ENCODE measurements at regions of chr7 and their contacts with region 1.

Region 1: GRCh38 chr7:29921404-29922010 is 68.1 kb downstream of the SCRN1 start:
- DNase-seq: peak; percentile 35
- H3K4me3 ChIP-seq: no peak overlapping the region
- H3K27ac ChIP-seq: no peak overlapping the region
- H3K4me1 ChIP-seq: no peaks in the 10 kb centered on the region
- H3K27me3 ChIP-seq: no peaks in the 10 kb centered on the region
- CTCF ChIP-seq: peak; percentile 85 to 91 (median 86)
- EP300 ChIP-seq: no peak
- POLR2A ChIP-seq: no peak

Region 2: DNA sequence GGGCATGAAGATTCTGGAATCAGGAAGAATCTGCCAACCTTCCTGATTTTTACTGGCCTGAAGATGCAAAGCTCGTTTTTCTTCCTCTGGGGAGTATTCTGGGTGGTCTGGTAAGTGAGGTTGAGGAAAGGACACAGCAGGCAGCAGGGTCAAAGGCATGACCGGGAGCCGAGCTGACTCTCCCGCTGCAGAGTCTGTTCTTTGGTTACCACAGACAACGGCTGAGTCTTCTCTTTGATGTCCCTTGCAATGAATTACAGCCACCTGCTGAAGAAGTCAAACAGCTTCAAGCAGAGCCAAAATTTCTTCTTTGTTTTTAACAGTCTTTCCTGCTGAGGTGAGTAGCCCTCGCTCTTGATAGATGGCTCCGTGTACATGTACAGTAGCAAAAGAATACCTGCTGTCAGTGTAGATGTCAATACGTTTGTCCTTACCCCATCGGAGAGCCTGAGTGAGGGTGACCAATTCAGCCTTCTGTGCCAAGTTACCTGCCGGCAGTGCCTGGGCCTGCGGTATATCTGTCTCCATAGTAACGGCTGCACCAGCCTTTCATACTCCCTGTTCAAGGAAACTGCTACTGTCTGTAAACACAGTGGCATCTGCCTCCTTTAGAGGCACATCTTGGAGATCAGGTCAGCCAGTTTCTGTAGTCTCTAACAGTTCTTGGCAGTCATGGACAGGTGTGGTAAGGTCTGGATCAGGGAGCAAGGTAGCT is 281.5 kb before region 1 on chr7:
- in situ Hi-C with region 1: loop called in 3 of 4 experiments (anchors 25 kb)
- intact Hi-C with region 1: no loop called
- DNase-seq: no peak
- H3K4me3 ChIP-seq: no peak overlapping the region
- H3K27ac ChIP-seq: no peak overlapping the region
- H3K4me1 ChIP-seq: peaks cover 0 to 9% (median 5%) of the 10 kb centered on the region in 4 donors
- H3K27me3 ChIP-seq: no peaks in the 10 kb centered on the region
- CTCF ChIP-seq: no peak
- EP300 ChIP-seq: no peak
- POLR2A ChIP-seq: no peak

Region 3: DNA sequence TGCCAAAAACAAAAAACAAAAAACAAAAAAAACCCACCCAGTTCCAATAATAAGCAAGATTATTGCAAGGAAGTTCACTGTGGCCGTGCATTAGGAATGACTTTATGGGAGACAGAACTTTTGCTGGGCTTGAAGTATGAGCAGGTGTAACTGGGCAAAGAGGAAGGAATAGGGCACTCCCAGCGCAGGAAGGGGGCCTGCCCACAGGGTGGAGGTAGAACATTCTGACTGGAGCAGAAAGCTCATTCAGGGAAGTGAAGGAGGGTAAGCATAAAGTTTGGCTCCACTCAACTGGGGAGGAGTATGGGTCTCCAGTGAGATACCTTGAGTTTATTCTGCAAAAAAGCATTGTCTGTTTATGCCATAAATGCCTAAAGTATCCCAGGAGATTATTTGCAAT is 157.3 kb before region 1 on chr7:
- in situ Hi-C with region 1: no loop called
- intact Hi-C with region 1: loop called (anchors 10 kb)
- DNase-seq: peak; percentile 17
- H3K4me3 ChIP-seq: no peak overlapping the region
- H3K27ac ChIP-seq: no peak overlapping the region
- H3K4me1 ChIP-seq: no peaks in the 10 kb centered on the region
- H3K27me3 ChIP-seq: peaks cover 2% of the 10 kb centered on the region
- CTCF ChIP-seq: no peak
- EP300 ChIP-seq: no peak
- POLR2A ChIP-seq: no peak

Region 4: DNA sequence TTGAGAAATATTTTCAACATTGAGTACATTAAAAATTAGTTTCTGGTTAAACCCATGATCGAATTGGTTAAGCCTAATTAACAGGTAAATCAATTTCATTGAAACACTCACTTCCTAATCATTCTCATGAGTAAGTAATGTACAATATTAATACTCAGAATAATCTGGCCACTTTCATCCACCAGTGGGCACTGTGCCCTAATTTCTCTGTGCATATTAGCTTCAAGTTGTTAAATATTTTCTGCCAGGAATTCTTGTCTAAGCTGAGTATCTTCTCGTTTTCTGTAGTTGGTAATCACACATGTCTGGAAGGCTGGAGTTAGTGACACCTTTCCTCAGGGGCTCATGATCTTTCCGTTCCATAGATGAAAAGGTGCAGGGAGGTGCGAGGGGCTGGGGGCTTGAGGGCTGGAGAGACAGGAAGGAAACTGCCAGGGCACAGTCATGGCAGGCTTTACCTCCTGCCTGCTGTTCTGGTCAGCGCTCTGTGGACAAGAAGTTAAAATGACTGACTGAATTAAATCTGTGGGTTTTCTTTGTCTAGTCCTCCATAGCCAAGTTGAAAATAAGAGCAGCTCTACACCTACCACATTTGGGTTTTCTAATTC is 43.3 kb before region 1 on chr7:
- in situ Hi-C with region 1: no loop called
- intact Hi-C with region 1: loop called (anchors 5 kb)
- DNase-seq: no peak
- H3K4me3 ChIP-seq: no peak overlapping the region
- H3K27ac ChIP-seq: no peak overlapping the region
- H3K4me1 ChIP-seq: peaks cover 0 to 4% (median 0%) of the 10 kb centered on the region in 4 donors
- H3K27me3 ChIP-seq: no peaks in the 10 kb centered on the region
- CTCF ChIP-seq: peak; percentile 33 to 44 (median 35)
- EP300 ChIP-seq: no peak
- POLR2A ChIP-seq: no peak

Region 5: GRCh38 chr7:30134611-30135545 is 213.4 kb after region 1 on chr7 and contains the start of gene MTURN:
- in situ Hi-C with region 1: no loop called
- intact Hi-C with region 1: no loop called
- DNase-seq: peak; percentile 92
- H3K4me3 ChIP-seq: peak within 1 kb of the TSS; percentile 61 to 98 (median 77)
- H3K27ac ChIP-seq: peak within 1 kb of the TSS; percentile 92 to 95 (median 93)
- H3K4me1 ChIP-seq: peaks cover 4 to 17% (median 8%) of the 10 kb centered on the region in 4 donors
- H3K27me3 ChIP-seq: no peaks in the 10 kb centered on the region
- CTCF ChIP-seq: peak in 1 of 5 experiments; percentile 2
- EP300 ChIP-seq: no peak
- POLR2A ChIP-seq: no peak
- total RNA-seq, gene MTURN: 7.9 to 28.3 (median 15.0) TPM

Measured in transverse colon (tissue), 4 donors.